GM10248 (cell line): ENCODE measurements at regions of chr19 and their contacts with region 1.

Region 1: DNA sequence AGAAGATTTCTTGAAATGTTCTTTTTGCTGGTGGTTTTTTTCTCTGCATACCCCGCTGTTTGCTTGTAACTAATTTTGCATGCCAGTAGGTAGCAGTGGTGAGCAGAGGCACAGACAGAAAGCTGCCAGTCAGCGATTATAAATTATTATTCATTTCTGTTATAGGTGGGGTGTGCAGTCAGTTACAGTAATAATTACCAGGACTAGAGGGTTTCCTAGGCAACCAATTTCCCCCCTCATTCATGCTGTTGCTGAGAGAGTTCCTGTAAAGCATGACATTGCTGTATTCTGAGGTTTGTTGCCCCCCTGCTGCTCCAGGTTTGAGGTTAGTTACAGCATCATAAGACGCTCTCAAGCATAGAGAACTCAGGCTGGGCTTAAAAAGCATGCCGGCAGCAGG is 104.5 kb downstream of the URI1 start:
- DNase-seq: no peak
- CTCF ChIP-seq: peak; percentile 50

Region 2: DNA sequence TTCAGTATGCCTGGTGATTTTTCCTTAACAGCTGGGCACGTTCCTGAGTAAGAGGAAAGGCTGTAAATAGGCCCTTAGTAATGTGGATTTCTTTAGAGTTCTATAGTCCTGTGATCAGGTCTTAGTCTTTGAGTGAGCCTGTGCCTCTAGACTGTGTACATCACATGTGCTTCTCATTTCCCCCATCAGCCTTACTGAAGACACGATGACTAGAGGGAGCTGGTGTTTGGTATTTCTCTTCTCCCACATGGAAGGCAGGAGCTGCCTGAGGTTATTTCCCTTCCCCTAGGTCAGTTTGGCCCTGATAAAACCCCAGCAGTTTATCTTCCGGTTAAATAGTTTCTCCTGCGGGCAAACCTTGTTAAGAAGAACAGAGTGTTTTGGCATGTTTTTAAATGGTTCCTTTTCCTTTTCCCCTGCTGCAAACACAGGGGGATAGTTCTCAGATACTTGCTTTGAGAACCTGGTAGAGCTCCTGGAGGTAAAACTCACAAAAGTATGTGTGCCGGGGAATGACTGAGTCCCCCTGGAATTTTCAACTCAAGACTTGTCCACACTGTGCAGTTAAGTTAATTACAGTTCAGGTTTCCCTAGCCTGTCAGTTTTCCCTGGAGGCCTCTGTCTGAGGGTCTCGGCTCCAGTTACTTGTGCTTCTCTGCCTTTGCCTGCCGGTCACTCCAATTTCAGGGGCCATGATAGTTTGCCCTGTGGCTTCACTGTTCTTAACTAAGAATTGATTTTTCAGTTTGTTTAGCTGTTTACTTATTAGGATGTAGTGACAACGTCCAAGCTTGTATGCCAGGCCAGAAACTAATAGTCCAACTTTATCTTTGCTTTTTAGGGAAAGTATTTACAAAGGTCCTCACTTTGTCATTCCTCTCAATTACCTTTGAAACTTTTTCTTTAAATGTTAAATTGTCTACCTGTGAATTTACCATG is 10.1 kb before region 1 on chr19:
- CTCF ChIA-PET with region 1: interaction called, 11 read pairs
- POLR2A ChIA-PET with region 1: no interaction called
- DNase-seq: no peak
- CTCF ChIP-seq: no peak